ENCODE measurements at regions of chr17 and their contacts with region 1.

Region 1: DNA sequence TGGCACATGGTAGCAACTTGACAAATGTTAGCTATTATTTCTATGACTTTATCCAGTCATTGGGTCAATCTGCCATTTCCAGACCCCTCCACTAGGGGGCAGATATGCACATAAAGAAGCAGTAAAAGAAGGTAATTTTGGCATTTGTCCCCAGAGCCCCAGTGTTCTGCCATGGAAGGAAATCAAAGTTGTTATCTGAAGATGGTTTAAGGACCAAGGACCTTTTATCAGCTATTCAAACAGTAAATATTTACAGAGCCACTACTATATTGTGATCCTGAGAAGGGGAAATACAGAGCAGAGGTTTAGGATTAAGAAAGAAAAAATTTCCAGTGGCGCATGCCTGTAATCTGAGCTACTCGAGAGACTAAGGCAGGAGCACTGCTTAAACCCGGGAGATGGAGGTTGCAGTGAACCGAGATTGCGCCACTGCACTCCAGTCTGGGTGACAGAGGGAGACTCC is 20.0 kb downstream of the TRAF4 start:
- DNase-seq: peak; percentile 67 to 74
- ATAC-seq: peak; percentile 36 to 68 (median 51)
- H3K4me3 ChIP-seq: no peak overlapping the region
- H3K27ac ChIP-seq: no peak overlapping the region
- H3K4me1 ChIP-seq: peaks cover 13% of the 10 kb centered on the region
- H3K27me3 ChIP-seq: no peaks in the 10 kb centered on the region
- CTCF ChIP-seq: peak; percentile 96

Region 2: DNA sequence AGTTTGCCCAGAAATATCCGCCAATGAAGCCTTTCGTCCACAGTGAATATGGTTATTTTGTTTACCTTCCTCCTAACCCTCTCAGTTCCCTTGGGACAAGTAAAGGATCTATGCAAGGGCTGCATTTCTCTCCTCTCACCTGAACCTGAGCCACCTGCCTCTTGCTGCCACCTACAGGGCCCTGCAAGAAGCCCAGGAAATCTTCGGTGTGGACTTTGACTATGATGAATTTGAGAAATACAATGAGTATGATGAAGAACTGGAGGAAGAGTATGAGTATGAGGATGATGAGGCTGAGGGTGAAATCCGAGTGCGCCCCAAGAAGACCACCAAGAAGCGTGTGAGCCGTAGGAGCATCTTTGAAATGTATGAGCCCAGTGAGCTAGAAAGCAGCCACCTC is 87.9 kb before region 1 on chr17:
- intact Hi-C with region 1: no loop called
- DNase-seq: no peak
- ATAC-seq: no peak
- H3K4me3 ChIP-seq: no peak overlapping the region
- H3K27ac ChIP-seq: no peak overlapping the region
- H3K4me1 ChIP-seq: no peaks in the 10 kb centered on the region
- H3K27me3 ChIP-seq: no peaks in the 10 kb centered on the region
- CTCF ChIP-seq: no peak

Region 3: GRCh38 chr17:28737859-28738679 is 25.8 kb before region 1 on chr17:
- intact Hi-C with region 1: no loop called
- DNase-seq: peak in 1 of 2 donors; percentile 36
- ATAC-seq: no peak
- H3K4me3 ChIP-seq: no peak overlapping the region
- H3K27ac ChIP-seq: no peak overlapping the region
- H3K4me1 ChIP-seq: peaks cover 6% of the 10 kb centered on the region
- H3K27me3 ChIP-seq: no peaks in the 10 kb centered on the region
- CTCF ChIP-seq: no peak

Region 4: DNA sequence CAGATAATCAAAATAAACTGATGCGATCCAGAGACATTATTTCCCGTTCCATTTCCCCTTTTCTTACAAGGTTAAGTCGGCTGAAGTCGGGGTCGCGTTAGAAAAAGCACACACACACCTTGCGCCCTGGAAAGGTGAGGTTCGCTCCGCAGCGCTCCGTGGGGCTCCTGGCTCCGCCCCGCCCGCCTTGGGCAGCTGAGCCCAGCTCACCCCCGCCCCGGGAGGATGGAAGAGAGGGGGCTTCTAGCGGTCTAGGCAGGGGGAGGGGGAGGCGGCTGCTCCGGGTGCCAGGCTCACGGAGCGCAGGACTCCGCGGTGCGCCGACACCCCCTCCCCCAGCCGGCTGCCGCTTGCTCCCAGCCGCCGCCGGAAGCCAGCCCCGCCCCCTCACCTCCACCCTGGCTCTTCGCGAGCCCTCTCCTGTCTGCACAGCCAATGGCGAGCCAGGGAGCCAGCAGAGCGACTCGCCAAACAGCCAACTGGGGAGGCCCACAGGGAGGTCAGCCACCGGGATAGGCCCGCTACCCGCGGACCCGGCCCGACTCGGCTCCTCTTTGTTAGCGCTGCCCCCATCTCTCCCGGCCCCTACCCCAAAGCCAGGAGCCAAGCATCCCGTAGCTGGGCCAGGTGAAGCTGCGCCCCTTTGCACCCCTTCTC is 48.4 kb after region 1 on chr17:
- intact Hi-C with region 1: loop called (anchors 5 kb)
- DNase-seq: peak; percentile 98 to 99
- ATAC-seq: peak; percentile 90 to 99 (median 95)
- H3K4me3 ChIP-seq: peak overlapping the region; percentile 91
- H3K27ac ChIP-seq: peak overlapping the region; percentile 91
- H3K4me1 ChIP-seq: peaks cover 43% of the 10 kb centered on the region
- H3K27me3 ChIP-seq: no peaks in the 10 kb centered on the region
- CTCF ChIP-seq: no peak

Region 5: DNA sequence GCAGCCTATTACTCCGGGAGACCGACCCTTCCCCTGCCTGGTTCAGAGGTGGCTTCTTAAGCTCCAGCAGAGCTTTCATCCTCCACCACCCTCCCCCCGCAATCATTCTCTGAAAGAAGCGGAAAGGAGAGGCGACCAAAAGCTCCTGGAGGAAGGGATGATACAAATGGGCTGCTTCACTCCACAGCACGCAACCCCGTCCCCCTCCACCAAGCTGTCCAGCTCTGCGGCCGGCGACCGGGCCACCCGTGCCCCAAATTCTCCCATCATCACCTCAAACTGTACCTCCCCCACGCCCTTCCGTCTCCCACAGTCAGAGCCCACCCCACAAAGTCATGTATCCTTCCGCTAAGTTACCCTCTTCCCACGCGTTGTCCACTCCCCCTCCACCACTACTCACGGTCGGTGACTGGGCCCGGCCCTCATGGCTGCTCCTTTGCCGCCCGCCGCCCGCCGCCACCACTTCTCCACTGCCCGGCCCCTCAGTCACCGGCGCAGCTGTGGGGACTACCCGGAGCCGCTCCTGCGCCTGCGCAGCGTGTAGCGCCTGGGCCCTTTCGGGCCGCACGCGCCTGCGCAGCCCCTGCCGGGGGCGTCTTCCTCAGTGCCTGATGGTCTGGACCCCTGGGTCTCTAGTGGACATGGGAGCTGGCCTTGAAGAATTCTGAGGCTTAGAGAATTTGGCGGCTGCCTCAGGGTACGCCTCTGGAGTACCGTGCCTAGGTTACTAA is 78.6 kb after region 1 on chr17 and contains the start of gene FAM222B:
- intact Hi-C with region 1: loop called (anchors 2 to 5 kb)
- DNase-seq: peak; percentile 88 to 94
- ATAC-seq: peak; percentile 99 to 100 (median 99)
- H3K4me3 ChIP-seq: peak within 1 kb of the TSS; percentile 98
- H3K27ac ChIP-seq: peak within 1 kb of the TSS; percentile 81
- H3K4me1 ChIP-seq: peaks cover 6% of the 10 kb centered on the region
- H3K27me3 ChIP-seq: no peaks in the 10 kb centered on the region
- CTCF ChIP-seq: no peak
- total RNA-seq, gene FAM222B: 25.3 to 52.9 (median 36.0) TPM

Region 6: DNA sequence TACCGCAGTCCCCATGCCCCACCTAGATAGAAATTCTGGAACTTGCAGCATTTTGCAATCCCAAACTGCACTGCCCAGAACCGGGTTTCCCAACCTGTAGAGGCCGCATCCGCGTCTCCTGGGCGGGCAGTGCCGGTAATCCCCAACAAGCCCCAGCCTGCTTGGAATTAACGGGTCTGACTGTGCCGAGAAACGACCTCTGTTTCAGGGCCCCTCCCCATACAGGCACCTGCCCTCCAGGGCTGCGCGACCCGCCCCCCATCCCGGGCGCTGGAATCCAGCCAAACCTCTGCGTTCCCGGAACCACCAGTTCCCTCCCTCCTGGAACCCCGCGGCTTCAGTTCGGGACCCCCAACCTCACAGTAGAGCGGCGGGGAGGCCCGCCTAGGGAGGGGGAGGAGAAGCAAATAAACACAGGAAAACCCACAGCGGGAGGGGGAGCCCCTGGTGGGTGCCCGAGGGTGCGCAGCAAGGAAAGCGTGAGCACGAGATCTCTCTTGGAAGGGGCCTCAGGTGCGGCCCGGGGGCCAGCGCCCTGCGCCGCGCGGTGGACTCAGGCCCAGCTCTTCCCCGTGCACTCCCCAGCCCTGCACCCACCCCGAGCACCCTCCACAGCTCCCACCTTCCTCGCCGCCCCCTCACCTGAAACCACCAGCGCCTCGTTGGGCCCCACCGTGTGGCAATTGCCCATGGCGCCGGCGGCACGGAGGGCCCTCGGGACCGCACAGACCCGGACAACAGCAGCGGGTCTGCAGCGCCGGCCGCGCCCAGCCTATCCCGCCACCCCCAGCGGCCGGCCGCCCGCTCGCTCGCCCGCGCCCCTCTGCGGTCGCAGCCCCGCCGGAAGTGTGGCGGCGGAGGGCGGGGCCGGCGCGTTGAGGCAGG is 133.3 kb after region 1 on chr17 and contains the start of gene FLOT2:
- intact Hi-C with region 1: loop called (anchors 5 to 10 kb)
- DNase-seq: peak; percentile 65 to 77
- ATAC-seq: peak; percentile 75 to 87 (median 82)
- H3K4me3 ChIP-seq: peak within 1 kb of the TSS; percentile 91
- H3K27ac ChIP-seq: peak within 1 kb of the TSS; percentile 92
- H3K4me1 ChIP-seq: peaks cover 27% of the 10 kb centered on the region
- H3K27me3 ChIP-seq: no peaks in the 10 kb centered on the region
- CTCF ChIP-seq: peak; percentile 11
- total RNA-seq, gene FLOT2: 40.8 to 81.1 (median 43.9) TPM

Measured in psoas muscle (tissue), 8 donors.